Activated naive CD8-positive, alpha-beta T cell treated with anti-CD3 and anti-CD28 coated beads, Interleukin-2, amount 10 ng/mL, durations not matched to agents 7 days and 5 days (primary cell): ENCODE measurements at regions of chr7 and their contacts with region 1.

Region 1: DNA sequence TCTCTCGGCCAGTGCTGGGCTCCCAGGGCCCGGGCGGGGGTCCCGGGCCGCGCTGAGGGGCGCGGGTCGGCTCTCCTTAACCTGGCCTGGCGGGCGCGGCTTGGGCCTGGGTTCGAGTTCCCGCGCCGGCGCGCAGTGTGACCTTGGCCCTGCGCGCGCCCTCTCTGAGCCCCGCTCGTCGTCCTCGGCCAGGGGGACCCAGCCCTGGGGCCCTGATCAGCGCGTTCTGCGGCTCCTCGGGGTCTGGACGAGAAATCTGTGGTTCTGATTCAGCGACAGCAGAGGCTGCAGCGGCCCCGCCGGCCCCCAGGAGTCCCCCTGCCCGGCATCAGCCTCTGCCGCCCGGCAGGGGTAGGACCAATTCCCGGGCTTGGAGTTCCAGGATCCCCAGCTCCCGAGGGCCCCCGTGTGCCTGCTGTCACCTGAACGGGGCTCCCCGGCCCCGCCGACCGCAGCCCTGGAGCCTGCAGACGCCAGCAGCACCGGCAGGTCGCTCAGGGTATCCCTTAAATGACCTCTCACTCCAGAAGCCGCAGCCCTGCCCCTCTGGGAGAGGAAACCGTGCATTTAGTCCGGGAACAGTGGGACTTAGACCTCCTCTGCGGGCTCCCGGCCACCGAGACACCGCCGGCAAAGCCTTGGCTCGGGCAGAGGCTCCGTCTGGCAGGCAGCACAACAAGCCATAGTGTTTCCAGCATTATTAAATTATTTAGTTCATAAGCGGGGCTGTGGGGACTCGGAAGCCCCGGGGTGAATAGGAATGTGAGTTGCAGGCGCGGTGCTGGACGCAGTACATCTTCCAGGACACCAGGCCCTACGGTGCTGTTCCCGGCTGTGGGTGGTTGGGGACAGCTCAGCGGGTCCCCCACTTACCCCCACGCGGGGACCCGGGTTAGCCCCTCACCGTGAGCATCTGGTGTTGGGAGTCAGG is 572 bp downstream of the CHST12 start:
- DNase-seq: peak; percentile 61
- ATAC-seq: peak; percentile 21
- H3K4me3 Mint-ChIP-seq: peak overlapping the region; percentile 89
- H3K27ac Mint-ChIP-seq: peak overlapping the region; percentile 99
- H3K4me1 Mint-ChIP-seq: peaks cover 52% of the 10 kb centered on the region
- H3K27me3 Mint-ChIP-seq: no peaks in the 10 kb centered on the region

Region 2: DNA sequence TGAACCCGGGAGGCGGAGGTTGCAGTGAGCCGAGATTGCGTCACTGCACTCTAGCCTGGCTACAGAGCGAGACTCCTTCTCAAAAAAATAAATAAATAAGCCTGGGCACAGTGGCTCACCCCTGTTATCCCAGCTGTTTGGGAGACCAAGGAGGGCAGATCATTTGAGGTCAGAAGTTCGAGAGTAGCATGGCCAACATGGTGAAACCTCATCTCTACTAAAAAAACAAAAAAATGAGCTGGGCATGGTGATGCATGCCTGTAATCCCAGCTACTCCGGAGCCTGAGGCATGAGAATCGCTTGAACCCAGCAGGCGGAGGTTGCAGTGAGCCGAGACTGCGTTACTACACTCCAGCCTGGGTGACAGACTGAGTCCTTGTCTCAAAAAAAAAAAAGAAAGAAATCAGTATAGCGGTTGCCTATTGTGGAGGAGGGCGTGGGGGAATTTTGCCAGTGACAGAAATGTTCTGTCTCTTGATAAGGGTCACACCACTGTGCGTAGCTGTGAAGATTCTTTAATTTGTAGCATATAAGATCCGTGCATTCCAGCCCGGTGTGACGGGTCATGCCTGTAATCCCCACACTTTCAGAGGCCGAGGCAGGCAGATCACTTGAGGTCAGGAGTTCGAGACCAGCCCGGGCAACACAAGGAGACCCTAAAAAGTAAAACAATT is 67.2 kb before region 1 on chr7:
- POLR2A ChIA-PET with region 1: no interaction called
- DNase-seq: no peak
- ATAC-seq: no peak
- H3K4me3 Mint-ChIP-seq: no peak overlapping the region
- H3K27ac Mint-ChIP-seq: no peak overlapping the region
- H3K4me1 Mint-ChIP-seq: no peaks in the 10 kb centered on the region
- H3K27me3 Mint-ChIP-seq: no peaks in the 10 kb centered on the region

Region 3: DNA sequence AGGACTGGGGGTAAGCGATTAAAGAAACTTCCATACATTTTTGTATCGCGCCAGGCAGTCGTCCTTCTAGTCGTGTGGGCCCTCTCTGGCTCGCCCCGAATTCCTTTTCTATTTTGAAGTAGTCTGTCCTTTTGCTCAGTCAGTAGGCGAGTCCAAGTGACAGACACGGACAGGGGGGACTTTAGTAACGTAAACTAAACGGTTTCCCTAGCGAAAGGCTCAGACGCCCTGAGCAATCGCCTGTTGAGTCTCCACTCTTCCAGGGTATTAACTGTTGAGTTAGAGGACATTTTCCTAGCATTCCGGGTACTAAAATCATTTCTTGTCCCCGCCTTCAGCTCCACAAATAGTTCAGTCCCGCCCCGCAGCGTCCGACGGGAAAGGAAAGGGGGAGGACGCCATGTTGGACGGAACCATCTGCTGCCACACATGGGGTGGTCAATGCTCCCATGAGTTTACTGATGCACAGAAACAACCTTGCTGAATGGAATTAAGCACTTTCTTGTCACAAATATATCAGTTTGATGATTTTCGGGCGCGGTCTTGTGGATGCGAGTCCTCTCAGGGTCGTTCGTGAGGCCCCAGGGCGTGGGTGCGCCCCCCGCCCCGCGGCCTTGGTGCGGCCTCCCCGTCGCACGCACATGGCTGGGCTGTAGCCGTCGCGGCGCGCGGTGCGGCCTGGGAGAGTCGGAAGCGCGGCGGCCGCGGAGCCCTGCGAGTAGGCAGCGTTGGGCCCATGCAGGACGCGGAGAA is 49.6 kb before region 1 on chr7 and contains the start of gene EIF3B:
- POLR2A ChIA-PET with region 1: interaction called, 38 read pairs
- DNase-seq: peak; percentile 94
- ATAC-seq: peak; percentile 91
- H3K4me3 Mint-ChIP-seq: peak within 1 kb of the TSS; percentile 87
- H3K27ac Mint-ChIP-seq: peak within 1 kb of the TSS; percentile 97
- H3K4me1 Mint-ChIP-seq: peaks cover 17% of the 10 kb centered on the region
- H3K27me3 Mint-ChIP-seq: no peaks in the 10 kb centered on the region
- total RNA-seq, gene EIF3B: 152 to 154 TPM

Region 4: DNA sequence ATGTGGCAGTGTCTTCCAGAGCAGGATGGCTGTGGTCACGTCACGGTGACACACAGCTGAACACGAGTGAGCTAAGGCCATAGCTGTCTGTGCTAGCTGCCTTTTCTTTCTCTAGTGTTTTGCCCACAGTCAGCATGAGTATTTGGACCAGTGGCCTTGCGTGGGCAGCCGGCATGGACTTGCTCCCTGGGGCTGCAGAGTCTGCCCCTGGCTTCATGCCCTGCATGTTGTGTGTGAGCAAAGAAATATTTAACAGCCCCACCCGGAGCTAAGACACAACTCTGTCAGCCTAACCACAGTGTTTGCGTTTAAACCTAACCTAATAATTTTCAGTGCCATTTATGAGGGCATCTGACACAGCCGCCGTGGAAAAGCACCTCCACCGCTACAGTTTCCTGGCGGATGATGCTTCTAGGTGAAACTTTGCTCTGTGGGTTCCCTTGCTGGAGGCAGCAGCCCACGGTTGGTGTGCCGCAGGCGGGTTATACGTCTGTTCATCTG is 14.0 kb after region 1 on chr7:
- POLR2A ChIA-PET with region 1: interaction called, 31 read pairs
- DNase-seq: peak; percentile 62
- ATAC-seq: peak; percentile 85
- H3K4me3 Mint-ChIP-seq: peak overlapping the region; percentile 59
- H3K27ac Mint-ChIP-seq: peak overlapping the region; percentile 64
- H3K4me1 Mint-ChIP-seq: peaks cover 39% of the 10 kb centered on the region
- H3K27me3 Mint-ChIP-seq: no peaks in the 10 kb centered on the region

Region 5: DNA sequence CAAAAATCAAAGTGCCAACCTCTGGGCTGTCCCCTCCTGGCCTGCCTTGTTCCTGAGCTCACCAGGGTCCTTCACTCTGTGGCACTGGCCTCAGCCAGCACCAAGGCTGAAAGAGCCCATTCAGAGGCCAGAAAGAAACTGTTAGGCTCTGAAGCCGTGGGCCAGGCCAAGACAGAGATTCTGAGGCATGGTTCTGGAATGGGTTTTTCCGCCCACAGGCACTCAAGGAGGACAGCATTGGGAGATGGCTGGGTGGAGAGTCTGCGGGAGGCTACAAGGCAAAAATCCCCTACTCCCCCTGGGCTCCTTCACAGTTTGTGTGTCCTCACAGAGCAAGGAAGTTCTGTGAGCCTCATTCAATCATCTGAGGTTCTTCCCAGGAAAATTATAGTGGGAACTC is 40.5 kb after region 1 on chr7:
- POLR2A ChIA-PET with region 1: no interaction called
- DNase-seq: no peak
- ATAC-seq: no peak
- H3K4me3 Mint-ChIP-seq: no peak overlapping the region
- H3K27ac Mint-ChIP-seq: no peak overlapping the region
- H3K4me1 Mint-ChIP-seq: peaks cover 4% of the 10 kb centered on the region
- H3K27me3 Mint-ChIP-seq: no peaks in the 10 kb centered on the region